ENCODE measurements at regions of chr1 and their contacts with region 1.

Region 1: GRCh38 chr1:200409761-200410565 is at the start of gene ZNF281:
- DNase-seq: peak; percentile 94 to 96
- H3K4me3 ChIP-seq: peak within 1 kb of the TSS; percentile 96
- H3K4me3 Mint-ChIP-seq: peak within 1 kb of the TSS; percentile 94
- H3K27ac Mint-ChIP-seq: peak within 1 kb of the TSS; percentile 87
- H3K4me1 ChIP-seq: peaks cover 31% of the 10 kb centered on the region
- H3K4me1 Mint-ChIP-seq: peaks cover 31% of the 10 kb centered on the region
- H3K27me3 ChIP-seq: no peaks in the 10 kb centered on the region
- H3K27me3 Mint-ChIP-seq: no peaks in the 10 kb centered on the region
- CTCF ChIP-seq: no peak
- total RNA-seq, gene ZNF281: 31.3 and 32.3 TPM in 2 replicates

Region 2: GRCh38 chr1:199612976-199613774 is 796.8 kb before region 1 on chr1:
- CTCF ChIA-PET with region 1: no interaction called
- POLR2A ChIA-PET with region 1: no interaction called
- intact Hi-C with region 1: no loop called
- DNase-seq: no peak
- H3K4me3 ChIP-seq: no peak overlapping the region
- H3K4me3 Mint-ChIP-seq: no peak overlapping the region
- H3K27ac Mint-ChIP-seq: no peak overlapping the region
- H3K4me1 ChIP-seq: no peaks in the 10 kb centered on the region
- H3K4me1 Mint-ChIP-seq: no peaks in the 10 kb centered on the region
- H3K27me3 ChIP-seq: no peaks in the 10 kb centered on the region; the same call in 1 of the 2 replicates
- H3K27me3 Mint-ChIP-seq: no peaks in the 10 kb centered on the region
- CTCF ChIP-seq: no peak

Region 3: DNA sequence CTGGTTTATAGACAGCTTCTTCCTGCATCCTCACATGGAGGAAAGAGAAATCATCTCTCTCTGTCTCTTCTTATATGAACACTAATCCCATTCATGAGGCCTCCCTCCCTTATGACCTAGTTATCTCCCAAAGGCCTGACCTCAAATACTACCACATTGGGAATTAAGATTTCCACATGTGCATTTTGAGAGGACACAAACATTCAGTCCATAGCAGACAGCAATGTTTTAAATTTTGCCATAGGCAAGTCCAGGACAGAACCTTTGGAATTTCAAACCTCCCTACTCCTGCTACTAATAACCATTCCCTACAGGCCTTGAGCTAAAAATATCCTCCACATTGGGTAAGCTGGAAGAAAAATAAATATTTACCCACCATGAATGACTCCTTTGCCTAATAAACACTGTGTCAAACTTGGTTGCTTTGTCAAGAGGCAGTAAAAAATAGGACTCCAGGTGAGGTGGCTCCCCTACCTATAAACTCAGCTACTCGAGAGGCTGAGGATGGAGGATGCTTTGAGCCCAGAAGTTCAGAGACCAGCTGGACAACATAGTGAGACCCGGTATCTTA is 113.8 kb before region 1 on chr1:
- CTCF ChIA-PET with region 1: no interaction called
- POLR2A ChIA-PET with region 1: no interaction called
- intact Hi-C with region 1: loop called (anchors 5 kb)
- DNase-seq: peak; percentile 51 to 61
- H3K4me3 ChIP-seq: no peak overlapping the region
- H3K4me3 Mint-ChIP-seq: peak overlapping the region; percentile 20
- H3K27ac Mint-ChIP-seq: peak overlapping the region; percentile 64
- H3K4me1 ChIP-seq: peaks cover 34% of the 10 kb centered on the region
- H3K4me1 Mint-ChIP-seq: peaks cover 31% of the 10 kb centered on the region
- H3K27me3 ChIP-seq: no peaks in the 10 kb centered on the region
- H3K27me3 Mint-ChIP-seq: no peaks in the 10 kb centered on the region
- CTCF ChIP-seq: no peak

Region 4: DNA sequence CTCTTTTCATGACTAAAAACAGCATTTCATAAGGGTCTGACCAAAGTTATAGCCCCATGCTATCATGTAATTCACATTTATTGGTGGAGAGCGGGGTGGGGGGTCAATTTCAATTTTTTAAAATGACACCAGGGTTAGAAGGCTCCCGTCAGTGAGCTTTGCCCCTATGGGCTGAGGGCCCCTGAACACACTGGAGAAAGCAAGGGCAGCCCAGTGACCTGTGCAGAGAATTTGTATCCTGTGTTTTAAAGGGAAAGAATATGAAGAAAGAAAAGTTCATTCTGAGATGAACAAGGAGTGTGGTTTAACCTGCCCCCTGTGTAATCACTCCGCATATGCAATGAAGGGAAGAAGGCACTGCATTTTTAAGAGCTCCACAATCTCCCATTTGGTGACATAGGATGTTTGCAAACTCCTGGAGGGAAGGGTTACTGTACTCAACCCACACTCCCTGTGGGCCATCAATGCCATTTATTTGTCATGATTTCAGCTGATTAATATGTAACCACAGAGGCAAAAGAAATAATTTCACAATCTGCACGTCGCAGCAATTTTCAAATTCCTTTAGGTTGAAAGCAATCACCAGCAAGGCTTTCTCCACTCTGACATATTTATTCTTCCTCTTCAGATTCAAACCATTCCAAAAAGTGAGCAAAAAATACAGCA is 95.7 kb before region 1 on chr1:
- CTCF ChIA-PET with region 1: no interaction called
- POLR2A ChIA-PET with region 1: interaction called, 3 read pairs
- intact Hi-C with region 1: loop called (anchors 1 kb)
- DNase-seq: peak; percentile 50 to 59
- H3K4me3 ChIP-seq: no peak overlapping the region
- H3K4me3 Mint-ChIP-seq: peak overlapping the region; percentile 52
- H3K27ac Mint-ChIP-seq: peak overlapping the region; percentile 86
- H3K4me1 ChIP-seq: peaks cover 28% of the 10 kb centered on the region
- H3K4me1 Mint-ChIP-seq: peaks cover 19% of the 10 kb centered on the region
- H3K27me3 ChIP-seq: no peaks in the 10 kb centered on the region
- H3K27me3 Mint-ChIP-seq: no peaks in the 10 kb centered on the region
- CTCF ChIP-seq: no peak

Region 5: DNA sequence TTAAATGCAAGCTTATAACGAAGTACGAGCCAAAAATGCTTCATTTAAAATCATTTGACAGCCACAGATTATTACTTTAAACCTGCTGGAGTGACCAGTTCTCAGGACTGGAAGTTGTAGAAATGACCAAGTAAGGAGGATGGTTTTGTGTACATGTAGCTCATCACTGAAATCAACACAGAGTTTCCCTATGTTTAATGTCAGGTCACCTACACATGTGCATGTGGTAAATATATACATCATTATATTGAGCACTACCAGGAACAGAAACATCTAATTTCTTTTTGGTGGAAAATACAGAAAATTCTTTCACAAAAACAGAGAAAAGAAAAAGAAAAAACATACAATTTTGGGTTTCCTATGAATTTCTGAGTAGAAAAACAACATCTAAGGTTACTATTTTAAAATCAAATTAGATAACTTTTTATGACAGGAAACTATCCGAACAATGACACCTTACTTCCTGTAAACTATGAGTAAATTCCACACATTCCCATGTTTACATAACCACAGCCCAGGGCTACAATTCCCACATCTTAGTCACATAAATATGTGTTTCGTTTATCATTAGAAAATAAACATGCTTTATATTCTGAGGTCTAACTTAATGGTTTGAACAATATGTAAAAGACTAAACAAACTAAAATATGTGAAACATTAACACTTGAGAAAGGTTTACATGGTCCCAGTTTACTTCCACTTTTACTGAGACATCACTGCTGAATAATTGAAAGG is 73.7 kb before region 1 on chr1:
- CTCF ChIA-PET with region 1: no interaction called
- POLR2A ChIA-PET with region 1: no interaction called
- intact Hi-C with region 1: loop called (anchors 1 kb)
- DNase-seq: peak in 1 of 2 experiments; percentile 22
- H3K4me3 ChIP-seq: no peak overlapping the region
- H3K4me3 Mint-ChIP-seq: peak overlapping the region; percentile 38
- H3K27ac Mint-ChIP-seq: peak overlapping the region; percentile 83
- H3K4me1 ChIP-seq: peaks cover 44% of the 10 kb centered on the region
- H3K4me1 Mint-ChIP-seq: peaks cover 35% of the 10 kb centered on the region
- H3K27me3 ChIP-seq: no peaks in the 10 kb centered on the region
- H3K27me3 Mint-ChIP-seq: no peaks in the 10 kb centered on the region
- CTCF ChIP-seq: no peak

Region 6: DNA sequence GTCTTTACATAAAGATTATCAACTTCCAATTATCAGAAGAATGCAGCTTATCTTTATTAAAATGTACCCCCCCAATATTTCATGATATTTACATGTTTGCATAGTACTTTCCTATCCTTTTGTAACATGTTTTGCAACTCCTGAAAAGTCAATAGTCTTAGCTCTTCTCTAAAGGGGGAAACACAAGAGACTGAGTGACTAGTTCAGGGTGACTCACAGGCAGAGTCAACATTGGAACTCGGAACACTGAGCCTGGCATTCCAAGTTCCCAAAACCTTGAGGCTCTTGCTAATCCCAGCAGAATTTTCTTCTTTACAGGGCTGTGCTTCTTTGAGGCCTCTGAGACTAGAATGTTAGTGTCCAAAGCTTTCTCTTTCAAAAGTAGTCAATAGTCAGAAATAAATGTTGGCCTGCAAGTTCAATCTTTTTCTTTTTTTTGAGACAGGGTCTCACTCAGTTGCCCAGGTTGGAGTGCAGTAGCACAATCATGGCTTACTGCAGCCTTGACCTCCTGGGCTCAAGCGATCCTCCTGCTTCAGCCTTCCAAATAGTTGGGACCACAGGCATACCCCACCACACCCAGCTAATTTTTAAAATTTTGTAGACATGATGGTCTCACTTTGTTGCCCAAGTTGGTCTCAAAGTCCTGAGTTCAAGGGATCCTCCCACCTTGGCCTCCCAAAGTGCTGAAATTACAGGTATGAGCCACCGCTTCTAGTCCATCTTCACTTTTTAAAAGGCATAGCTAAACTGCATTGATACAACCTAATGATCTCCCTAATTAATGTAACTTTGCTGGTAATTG is 37.7 kb before region 1 on chr1:
- CTCF ChIA-PET with region 1: no interaction called
- POLR2A ChIA-PET with region 1: interaction called, 6 read pairs
- intact Hi-C with region 1: loop called (anchors 1 kb)
- DNase-seq: peak; percentile 74 to 79
- H3K4me3 ChIP-seq: no peak overlapping the region
- H3K4me3 Mint-ChIP-seq: peak overlapping the region; percentile 45
- H3K27ac Mint-ChIP-seq: peak overlapping the region; percentile 66
- H3K4me1 ChIP-seq: peaks cover 68% of the 10 kb centered on the region
- H3K4me1 Mint-ChIP-seq: peaks cover 79% of the 10 kb centered on the region
- H3K27me3 ChIP-seq: no peaks in the 10 kb centered on the region
- H3K27me3 Mint-ChIP-seq: no peaks in the 10 kb centered on the region
- CTCF ChIP-seq: no peak

Region 7: DNA sequence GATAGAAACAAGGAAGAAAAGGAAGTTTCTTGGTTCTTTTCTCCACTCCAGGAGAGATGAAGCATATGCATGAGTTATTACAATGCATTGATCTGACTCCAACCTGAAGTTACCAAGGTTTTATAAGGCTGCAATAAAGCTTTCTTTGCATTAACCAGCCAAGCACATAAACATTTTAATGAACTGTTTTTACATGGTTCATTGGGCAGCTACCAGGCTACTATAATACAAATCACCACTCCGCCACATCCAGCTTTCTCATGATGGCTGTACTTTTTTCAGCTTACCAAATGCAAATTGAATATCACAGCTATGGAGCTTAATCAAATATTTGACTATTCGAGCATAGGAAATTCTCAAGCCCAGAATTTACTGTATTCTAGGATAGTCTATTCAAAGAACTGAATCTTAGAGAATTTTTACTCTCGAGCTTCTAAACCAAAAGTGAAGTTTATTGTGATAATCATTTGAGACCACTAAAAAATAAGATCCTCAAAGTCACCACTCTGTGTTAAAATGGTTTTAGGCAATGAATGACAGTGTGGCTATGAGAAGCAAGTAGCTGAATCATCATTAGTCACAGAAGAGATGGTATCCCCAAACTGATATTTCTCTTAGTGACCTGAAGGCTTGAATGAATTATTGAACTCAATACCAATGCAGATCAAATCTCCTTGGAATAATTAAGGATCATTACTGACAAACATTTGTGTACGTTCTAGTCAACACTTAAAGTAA is 58.5 kb after region 1 on chr1:
- CTCF ChIA-PET with region 1: no interaction called
- POLR2A ChIA-PET with region 1: no interaction called
- intact Hi-C with region 1: loop called (anchors 2 kb)
- DNase-seq: no peak
- H3K4me3 ChIP-seq: no peak overlapping the region
- H3K4me3 Mint-ChIP-seq: no peak overlapping the region
- H3K27ac Mint-ChIP-seq: no peak overlapping the region
- H3K4me1 ChIP-seq: peaks cover 22% of the 10 kb centered on the region
- H3K4me1 Mint-ChIP-seq: peaks cover 22% of the 10 kb centered on the region
- H3K27me3 ChIP-seq: no peaks in the 10 kb centered on the region
- H3K27me3 Mint-ChIP-seq: no peaks in the 10 kb centered on the region
- CTCF ChIP-seq: no peak

Region 8: GRCh38 chr1:200488375-200489165 is 78.6 kb after region 1 on chr1:
- CTCF ChIA-PET with region 1: interaction called, 4 read pairs
- POLR2A ChIA-PET with region 1: no interaction called
- intact Hi-C with region 1: loop called (anchors 2 kb)
- DNase-seq: peak; percentile 72 to 82
- H3K4me3 ChIP-seq: no peak overlapping the region
- H3K4me3 Mint-ChIP-seq: no peak overlapping the region
- H3K27ac Mint-ChIP-seq: peak overlapping the region; percentile 67
- H3K4me1 ChIP-seq: no peaks in the 10 kb centered on the region
- H3K4me1 Mint-ChIP-seq: peaks cover 18% of the 10 kb centered on the region
- H3K27me3 ChIP-seq: no peaks in the 10 kb centered on the region
- H3K27me3 Mint-ChIP-seq: no peaks in the 10 kb centered on the region
- CTCF ChIP-seq: peak; percentile 76 to 83